Activated CD4-positive, alpha-beta T cell treated with anti-CD3 and anti-CD28 coated beads, Interleukin-2, amount 10 ng/mL, durations not matched to agents 24 days and 14 days (primary cell): ENCODE measurements at regions of chr12 and their contacts with region 1.

Region 1: DNA sequence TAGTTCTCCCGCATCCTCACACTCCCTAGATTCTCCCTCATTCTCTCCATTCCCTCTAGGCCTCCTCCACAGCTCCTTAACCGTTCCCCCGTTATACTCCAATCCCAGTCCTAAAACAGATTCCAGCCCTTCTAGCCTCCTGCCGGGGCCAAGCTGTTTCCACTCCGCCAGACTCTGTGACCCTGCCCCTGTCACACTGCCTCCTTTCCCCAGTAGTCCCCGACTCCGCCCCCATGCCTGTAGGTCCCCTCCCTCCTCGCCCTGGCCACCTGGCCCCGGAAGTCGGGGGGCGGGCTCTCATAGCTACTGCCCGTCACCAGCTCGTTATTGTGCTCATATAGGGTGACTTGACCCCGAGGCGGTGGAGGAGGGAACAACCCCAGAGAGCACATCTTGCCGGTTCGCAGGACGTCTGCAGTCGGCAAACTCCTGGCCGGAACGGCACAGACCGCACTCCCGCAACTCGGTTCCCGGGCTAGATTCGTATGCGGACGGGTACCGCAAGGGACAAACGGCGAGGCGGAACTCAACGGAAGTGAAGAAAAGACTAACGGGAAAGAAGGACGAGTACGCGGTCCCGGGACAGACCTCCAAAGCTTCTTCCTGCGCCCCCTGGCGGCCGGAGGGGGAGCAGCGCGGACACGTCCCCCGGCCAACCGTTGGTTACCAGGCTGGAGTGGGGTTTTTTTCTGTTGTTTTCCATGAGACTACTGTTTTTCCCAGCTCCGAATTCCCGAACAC is at the start of gene AAAS:
- DNase-seq: peak; percentile 99
- H3K4me3 Mint-ChIP-seq: peak within 1 kb of the TSS; percentile 98
- H3K27ac Mint-ChIP-seq: peak within 1 kb of the TSS; percentile 96
- H3K4me1 Mint-ChIP-seq: peaks cover 39% of the 10 kb centered on the region
- H3K27me3 Mint-ChIP-seq: no peaks in the 10 kb centered on the region
- total RNA-seq, gene AAAS: 86.7 and 91.1 TPM in 2 replicates

Region 2: DNA sequence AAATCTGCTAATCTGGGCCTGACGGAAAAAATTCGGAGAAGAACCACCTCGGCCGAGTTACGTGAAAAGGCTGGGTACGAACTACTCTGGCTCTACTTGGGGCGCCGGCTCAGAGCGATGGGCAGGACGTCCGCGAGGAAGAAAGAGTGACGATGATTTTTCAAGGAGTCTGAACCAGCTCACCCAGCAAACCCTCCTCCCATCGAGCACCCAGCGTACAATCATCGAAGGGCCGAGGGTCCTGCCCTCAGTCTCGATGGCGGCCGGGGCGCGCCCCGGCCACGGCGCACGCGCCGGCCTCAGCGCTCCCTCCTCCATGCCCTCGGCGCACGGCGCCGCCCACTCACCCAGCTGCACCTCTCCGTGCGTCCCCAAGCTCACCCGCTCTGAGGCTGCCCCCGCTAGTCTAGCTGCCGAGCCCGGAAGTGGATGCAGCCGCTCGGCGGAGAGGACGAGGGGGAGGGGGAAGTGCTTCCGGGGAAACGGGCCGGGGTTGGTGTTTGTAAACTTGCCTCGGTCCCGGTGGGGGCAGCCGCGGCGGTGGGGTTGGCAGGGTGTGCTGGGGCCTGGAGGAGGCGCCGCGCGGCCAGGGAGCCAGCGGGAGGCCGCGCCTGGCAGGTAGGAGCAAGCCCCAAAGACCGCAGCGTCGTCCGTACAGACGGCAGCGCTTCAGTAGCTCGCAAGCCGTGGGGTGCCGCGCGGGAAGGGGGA is 140.9 kb before region 1 on chr12 and contains the starts of genes CSAD and ZNF740:
- intact Hi-C with region 1: loop called (anchors 1 kb)
- DNase-seq: peak; percentile 99
- H3K4me3 Mint-ChIP-seq: peak within 1 kb of the TSS; percentile 96
- H3K27ac Mint-ChIP-seq: peak within 1 kb of the TSS; percentile 95
- H3K4me1 Mint-ChIP-seq: peaks cover 48% of the 10 kb centered on the region
- H3K27me3 Mint-ChIP-seq: no peaks in the 10 kb centered on the region
- total RNA-seq, gene CSAD: 21.6 and 25.6 TPM in 2 replicates
- total RNA-seq, gene ZNF740: 44.0 and 50.5 TPM in 2 replicates

Region 3: DNA sequence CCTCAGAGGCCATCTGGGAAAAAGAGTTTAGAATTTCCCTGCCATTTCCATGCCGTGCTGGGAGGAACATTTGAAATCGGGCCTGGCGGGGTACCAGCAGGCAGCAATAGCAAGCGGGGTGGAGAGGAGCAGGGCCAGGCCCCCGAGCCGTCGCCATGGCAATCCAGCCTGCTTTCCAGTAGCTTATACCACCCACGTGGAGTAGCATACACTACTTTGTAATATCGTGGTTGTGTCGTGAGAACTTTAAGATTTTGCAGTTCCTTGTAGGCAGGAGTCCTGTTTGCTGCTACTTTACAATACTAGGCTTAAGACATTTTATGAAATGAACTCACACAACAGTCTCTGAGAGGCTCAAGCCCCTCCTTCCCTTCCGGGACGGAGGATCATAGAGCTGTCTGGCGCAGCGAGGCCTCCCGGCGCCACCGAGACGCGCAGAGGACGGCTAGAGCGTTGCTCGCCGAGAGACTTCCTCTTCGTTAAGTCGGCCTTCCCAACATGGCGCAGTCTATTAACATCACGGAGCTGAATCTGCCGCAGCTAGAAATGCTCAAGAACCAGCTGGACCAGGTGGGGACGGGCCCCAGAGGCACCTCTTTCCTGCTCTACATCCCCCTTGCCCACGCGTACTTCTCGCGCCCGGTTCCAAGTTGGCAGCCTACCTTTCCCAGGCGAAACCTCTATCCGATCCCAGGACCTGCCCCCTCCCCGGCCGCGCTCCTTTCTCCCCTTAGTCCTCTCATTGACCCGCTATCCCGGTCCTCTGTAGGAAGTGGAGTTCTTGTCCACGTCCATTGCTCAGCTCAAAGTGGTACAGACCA is 26.0 kb before region 1 on chr12 and contains the start of gene PFDN5:
- intact Hi-C with region 1: loop called (anchors 1 kb)
- DNase-seq: peak; percentile 97
- H3K4me3 Mint-ChIP-seq: peak within 1 kb of the TSS; percentile 98
- H3K27ac Mint-ChIP-seq: peak within 1 kb of the TSS; percentile 90
- H3K4me1 Mint-ChIP-seq: peaks cover 33% of the 10 kb centered on the region
- H3K27me3 Mint-ChIP-seq: no peaks in the 10 kb centered on the region
- total RNA-seq, gene PFDN5: 319 and 342 TPM in 2 replicates

Region 4: DNA sequence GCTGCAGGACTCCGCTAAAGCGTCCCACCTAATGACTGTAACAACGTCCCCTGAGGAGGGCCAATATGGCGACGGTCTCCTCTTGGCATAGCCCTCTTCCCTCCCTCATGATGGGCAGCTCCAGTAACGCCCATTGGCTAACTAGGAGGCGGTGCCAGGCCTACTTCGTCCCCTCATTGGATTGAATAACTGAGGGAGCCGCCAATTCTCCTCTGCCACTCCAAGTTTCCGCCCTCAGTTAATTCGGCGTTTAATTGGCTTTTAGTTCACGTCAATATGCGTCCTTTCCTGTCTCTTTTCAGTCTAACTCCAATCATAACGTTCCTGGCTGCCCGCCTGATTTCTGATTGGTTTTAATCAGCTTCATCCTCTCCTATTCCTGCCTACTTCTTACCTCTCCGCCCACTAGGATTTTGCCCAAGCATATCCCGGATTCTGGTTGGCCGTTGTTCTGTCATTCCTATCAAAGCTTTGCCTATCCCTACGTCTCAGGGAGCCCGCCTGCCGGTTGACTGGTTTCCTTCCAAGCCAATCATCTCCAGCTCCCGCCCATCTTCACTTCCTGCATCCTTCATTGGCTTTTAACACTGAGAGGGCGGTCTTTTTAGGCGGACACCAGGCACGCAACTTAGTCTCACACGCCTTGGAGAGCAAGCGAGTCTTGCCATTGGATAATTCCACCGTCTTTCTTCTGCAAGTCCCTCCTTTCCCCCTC is 58.3 kb after region 1 on chr12:
- intact Hi-C with region 1: loop called (anchors 1 kb)
- DNase-seq: peak; percentile 100
- H3K4me3 Mint-ChIP-seq: no peak overlapping the region
- H3K27ac Mint-ChIP-seq: no peak overlapping the region
- H3K4me1 Mint-ChIP-seq: peaks cover 34% of the 10 kb centered on the region
- H3K27me3 Mint-ChIP-seq: no peaks in the 10 kb centered on the region

Region 5: GRCh38 chr12:53441040-53441833 is 120.0 kb after region 1 on chr12 and contains the start of gene PRR13:
- intact Hi-C with region 1: loop called (anchors 1 kb)
- DNase-seq: peak; percentile 99
- H3K4me3 Mint-ChIP-seq: peak within 1 kb of the TSS; percentile 97
- H3K27ac Mint-ChIP-seq: peak within 1 kb of the TSS; percentile 96
- H3K4me1 Mint-ChIP-seq: peaks cover 30% of the 10 kb centered on the region
- H3K27me3 Mint-ChIP-seq: no peaks in the 10 kb centered on the region
- total RNA-seq, gene PRR13: 201 and 211 TPM in 2 replicates

Region 6: DNA sequence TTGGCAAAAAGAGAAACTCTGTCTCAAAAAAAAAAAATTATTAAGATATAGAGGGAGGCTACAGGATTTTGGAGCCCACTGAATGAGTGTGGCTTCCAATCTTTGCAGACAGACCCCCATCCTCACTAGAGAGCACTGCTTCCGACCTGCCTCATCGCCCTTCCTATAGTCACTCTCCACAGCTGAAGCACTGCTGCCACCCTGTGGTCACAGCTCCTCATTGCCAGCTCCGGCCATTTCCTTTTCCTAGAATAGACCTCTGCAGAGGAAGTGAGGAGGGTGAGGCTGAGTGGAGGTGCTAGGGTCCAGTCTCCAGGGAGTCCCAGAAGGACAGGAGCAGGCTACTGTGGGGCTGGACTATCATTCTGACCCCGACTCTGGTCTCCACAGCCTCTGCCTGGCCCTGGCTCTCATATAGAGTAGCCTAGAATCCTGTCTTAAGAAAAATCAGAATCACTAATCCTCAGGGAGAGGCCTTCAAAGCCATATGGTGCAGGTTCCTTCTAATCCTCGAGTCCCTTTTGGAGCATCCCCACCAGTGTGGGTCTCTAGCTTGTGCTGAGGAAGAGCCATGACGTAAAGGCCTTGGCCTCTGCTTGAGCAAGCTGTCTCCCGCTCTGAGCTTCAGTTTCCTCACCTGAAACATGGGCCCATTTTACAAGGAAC is 187.4 kb after region 1 on chr12:
- intact Hi-C with region 1: loop called (anchors 2 kb)
- DNase-seq: peak; percentile 96
- H3K4me3 Mint-ChIP-seq: no peak overlapping the region
- H3K27ac Mint-ChIP-seq: peak overlapping the region; percentile 46
- H3K4me1 Mint-ChIP-seq: peaks cover 10% of the 10 kb centered on the region
- H3K27me3 Mint-ChIP-seq: no peaks in the 10 kb centered on the region